Right cardiac atrium (tissue), 5 donors: ENCODE measurements at regions of chr1 and their contacts with region 1.

Region 1: GRCh38 chr1:184903111-184903692 is 71.1 kb downstream of the NIBAN1 start:
- DNase-seq: no peak
- ATAC-seq: peak; percentile 55 to 59
- H3K4me3 ChIP-seq: no peak overlapping the region
- H3K27ac ChIP-seq: peak overlapping the region; percentile 36
- H3K4me1 ChIP-seq: no peaks in the 10 kb centered on the region
- H3K27me3 ChIP-seq: no peaks in the 10 kb centered on the region

Region 2: DNA sequence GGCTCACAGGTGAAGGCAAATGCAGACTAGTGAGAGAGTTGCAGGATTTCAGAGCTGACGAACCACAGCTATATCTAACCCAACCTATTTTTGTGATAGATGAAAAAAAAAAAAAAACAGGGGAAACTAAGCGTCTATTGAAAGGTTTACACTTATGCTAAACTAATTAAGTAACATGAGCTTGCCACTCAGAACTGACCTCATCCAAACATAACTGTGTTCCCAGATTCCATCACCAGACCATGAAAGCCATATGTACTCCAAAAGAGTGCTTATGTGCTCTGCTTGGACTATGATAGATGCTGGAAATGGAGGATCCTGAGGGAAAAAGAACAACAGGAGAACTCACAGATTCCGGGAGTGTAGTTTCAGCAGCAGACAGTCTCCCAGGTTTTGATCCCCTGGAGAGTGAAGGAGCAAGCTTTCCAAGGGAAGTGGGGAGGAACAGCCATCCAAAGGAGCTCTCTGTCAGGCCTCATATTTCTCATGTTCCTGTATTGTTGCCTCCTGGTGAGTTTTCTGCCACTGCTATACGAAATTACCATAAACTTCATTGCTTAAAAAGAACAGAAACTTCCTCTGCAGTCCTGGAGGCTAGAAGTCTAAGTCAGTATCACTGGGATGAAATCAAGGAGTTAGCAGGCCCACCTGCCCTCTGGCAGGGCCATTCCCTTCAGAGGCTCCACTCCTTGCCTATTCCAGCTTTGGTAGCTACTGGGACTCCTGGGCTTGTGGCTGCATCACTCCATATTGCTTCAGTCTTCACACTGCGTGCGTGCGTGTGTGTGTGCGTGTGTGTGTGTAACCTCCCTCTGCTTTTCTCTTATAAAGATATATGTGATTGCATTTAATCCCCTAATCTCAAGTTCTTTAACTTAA is 33.0 kb after region 1 on chr1:
- intact Hi-C with region 1: loop called in 1 of 4 experiments (anchors 5 kb)
- DNase-seq: no peak
- ATAC-seq: peak in 1 of 2 donors; percentile 20
- H3K4me3 ChIP-seq: no peak overlapping the region
- H3K27ac ChIP-seq: peak overlapping the region; percentile 1
- H3K4me1 ChIP-seq: peaks cover 4% of the 10 kb centered on the region
- H3K27me3 ChIP-seq: no peaks in the 10 kb centered on the region